ENCODE measurements at regions of chr6 and their contacts with region 1.

Region 1: DNA sequence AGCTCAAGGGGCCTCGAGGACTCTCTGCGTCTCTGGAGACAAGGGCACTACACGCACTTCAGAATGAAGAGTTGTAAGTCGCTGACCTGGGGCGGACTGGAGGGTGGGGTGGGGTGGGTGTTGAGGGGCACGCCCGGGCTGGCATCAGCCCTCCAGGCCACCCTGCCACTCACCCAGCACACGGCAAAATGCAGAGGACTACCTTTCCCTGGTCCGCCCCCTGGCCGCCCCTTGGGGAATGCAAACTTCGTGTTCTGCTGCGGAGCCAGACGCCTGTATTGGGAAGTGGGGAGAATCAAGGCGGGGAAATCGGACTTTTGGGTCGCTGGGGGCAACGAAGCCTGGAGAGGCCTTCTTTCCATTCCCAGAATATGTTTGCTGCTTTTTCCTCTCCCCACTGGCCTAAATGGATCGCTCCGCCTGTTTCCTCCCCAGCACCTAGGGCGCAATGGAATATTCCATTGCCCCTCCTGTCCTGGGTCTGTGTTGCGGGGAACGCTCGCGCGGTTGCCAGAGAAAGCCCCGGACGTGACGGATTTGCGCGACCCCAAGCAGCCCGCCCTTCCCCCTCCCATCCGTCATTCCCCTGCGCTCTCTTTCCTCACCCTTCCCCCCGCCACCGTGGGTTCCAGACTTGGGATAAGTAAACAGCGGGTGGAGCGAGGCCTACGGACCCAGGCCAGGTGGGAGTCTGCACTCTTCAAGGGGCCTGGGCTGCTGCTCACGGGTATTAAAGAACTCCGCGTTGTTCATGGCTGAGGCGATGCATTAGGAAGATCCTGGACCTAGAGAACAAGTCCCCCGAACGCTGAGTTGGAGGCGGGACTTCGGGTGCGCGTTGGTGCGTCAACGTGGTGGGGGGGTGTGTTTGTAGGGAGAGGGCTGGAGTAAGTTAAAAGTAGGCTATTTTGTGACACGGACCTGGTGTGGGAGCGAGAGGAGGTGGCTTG is at the start of gene PPT2:
- DNase-seq: peak; percentile 89
- H3K4me3 Mint-ChIP-seq: peak within 1 kb of the TSS; percentile 84
- H3K27ac Mint-ChIP-seq: peak within 1 kb of the TSS; percentile 72
- H3K4me1 Mint-ChIP-seq: peaks cover 31% of the 10 kb centered on the region
- H3K27me3 Mint-ChIP-seq: peaks cover 34% of the 10 kb centered on the region
- total RNA-seq, gene PPT2: 11.3 and 12.7 TPM in 2 replicates

Region 2: DNA sequence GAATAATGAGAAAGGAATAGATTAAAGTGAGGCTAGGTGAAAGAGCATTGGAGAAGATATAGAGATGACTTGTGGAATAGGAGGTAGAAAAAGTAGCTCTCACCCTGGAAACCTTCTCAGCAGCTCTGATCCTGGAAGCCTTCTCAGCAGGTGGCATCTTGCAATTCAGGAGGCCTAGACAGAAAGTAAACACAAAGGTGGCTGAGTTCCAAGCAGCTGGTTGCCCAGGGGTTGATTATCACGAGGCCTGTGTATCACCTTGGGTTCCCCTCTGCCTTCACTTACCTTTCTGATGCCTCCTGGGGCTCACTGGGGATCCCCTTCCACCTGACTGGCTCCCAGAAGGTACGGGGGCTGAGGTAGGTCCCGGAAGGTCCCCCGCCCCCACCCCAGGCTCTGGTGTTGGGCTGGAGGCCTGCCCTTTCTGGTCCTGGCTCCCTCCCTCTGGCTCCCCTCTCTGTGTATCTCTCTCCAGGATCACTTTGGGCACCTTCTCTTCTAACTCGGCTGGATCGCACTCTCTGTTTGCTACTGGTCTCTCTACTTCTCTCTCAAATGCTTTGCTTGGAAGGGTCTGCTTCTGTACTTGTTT is 1446.5 kb before region 1 on chr6:
- intact Hi-C with region 1: no loop called
- DNase-seq: no peak
- H3K4me3 Mint-ChIP-seq: no peak overlapping the region
- H3K27ac Mint-ChIP-seq: no peak overlapping the region
- H3K4me1 Mint-ChIP-seq: peaks cover 28% of the 10 kb centered on the region
- H3K27me3 Mint-ChIP-seq: no peaks in the 10 kb centered on the region

Region 3: GRCh38 chr6:32047850-32048766 is 105.7 kb before region 1 on chr6:
- intact Hi-C with region 1: loop called (anchors 10 kb)
- DNase-seq: peak; percentile 91
- H3K4me3 Mint-ChIP-seq: no peak overlapping the region
- H3K27ac Mint-ChIP-seq: no peak overlapping the region
- H3K4me1 Mint-ChIP-seq: no peaks in the 10 kb centered on the region
- H3K27me3 Mint-ChIP-seq: peaks cover 2% of the 10 kb centered on the region

Region 4: GRCh38 chr6:32087574-32088486 is 66.0 kb before region 1 on chr6:
- intact Hi-C with region 1: loop called (anchors 2 kb)
- DNase-seq: peak; percentile 90
- H3K4me3 Mint-ChIP-seq: no peak overlapping the region
- H3K27ac Mint-ChIP-seq: no peak overlapping the region
- H3K4me1 Mint-ChIP-seq: peaks cover 15% of the 10 kb centered on the region
- H3K27me3 Mint-ChIP-seq: peaks cover 74% of the 10 kb centered on the region

Region 5: DNA sequence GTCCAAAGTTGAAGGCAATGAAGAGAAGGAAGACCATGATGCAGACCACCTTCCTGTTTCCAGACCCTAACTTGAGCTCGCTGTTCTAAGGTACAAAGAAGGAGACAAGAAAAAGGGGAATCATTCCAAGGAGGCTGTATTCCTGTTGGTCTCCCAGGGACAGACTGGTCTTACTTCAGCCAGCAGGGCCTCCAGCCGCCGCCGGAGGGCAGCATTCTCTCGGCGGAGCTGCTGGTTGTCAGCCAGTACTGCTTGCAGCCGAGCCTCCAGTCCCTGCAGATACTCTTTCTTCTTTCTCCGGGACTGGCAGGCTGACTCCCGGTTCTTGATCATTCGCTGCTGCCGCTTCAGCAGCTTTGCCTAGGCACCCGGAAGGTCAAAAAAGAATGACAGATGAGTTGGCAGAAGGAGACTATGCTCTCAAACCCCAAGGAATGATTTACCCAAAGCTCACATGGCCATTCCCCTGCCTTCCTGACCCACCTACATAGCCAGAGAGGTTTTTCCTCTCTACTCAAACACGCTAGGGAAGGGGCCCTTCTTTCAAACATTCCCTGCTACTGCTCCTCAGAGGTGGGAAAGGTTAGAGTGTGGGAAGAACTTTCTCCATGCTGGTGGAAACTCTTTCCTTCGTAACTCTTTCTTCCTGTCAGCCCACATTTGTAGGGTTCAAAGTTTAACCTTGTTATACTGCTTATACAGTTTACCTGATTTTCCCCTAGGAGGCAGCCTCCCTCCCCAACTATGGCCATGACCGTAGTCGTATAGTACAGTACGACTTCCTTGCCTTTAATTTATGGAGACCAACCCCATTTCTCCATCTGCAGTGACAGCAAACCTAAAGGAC is 34.8 kb before region 1 on chr6:
- intact Hi-C with region 1: loop called (anchors 1 kb)
- DNase-seq: peak; percentile 92
- H3K4me3 Mint-ChIP-seq: no peak overlapping the region
- H3K27ac Mint-ChIP-seq: no peak overlapping the region
- H3K4me1 Mint-ChIP-seq: peaks cover 5% of the 10 kb centered on the region
- H3K27me3 Mint-ChIP-seq: no peaks in the 10 kb centered on the region

Region 6: DNA sequence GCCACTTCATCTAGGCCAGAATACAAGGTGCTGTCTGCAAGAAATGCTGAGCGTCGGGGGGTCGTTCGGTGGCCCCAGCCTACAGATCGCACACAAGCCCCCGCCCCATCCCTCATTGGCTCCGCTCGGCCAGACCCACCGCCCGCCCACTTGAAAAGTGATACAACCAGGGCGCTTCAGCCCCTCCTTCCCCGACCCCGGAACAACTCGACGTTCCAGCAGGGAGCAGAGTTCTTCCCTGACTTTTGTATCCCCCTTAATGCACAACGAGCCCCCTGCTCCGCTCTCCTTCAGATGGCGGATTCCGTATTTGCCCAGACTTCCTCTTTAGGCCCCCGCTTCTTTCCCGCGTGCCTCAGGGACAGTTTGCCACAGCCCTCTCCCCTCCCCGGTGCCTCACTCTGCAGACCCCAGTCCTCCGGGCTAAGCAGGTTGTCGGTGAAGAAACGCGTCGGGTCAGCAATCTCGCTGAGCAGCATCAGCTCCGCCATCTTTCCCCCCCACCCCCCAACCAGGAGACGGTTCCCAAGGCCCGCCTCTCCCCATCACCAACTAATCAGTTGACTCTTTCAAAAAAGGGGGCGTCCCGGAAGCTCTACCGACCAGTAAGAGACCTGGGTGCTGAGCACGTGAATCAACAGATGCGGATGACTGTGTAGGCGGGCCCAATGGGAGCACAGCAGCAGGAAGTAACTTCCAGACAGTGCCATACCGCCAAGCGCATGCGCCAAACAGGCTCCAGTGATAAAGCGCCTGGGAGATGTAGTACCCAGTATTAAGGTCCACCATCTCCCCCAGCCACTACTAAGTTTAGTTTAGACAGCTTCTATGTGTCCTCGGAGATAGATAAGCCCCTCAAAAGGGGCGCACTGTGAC is 25.9 kb before region 1 on chr6 and contains the start of gene ATF6B:
- intact Hi-C with region 1: loop called (anchors 1 kb)
- DNase-seq: peak; percentile 98
- H3K4me3 Mint-ChIP-seq: peak within 1 kb of the TSS; percentile 100
- H3K27ac Mint-ChIP-seq: peak within 1 kb of the TSS; percentile 96
- H3K4me1 Mint-ChIP-seq: peaks cover 39% of the 10 kb centered on the region
- H3K27me3 Mint-ChIP-seq: peaks cover 2% of the 10 kb centered on the region
- total RNA-seq, gene ATF6B: 72.9 and 81.0 TPM in 2 replicates

Region 7: DNA sequence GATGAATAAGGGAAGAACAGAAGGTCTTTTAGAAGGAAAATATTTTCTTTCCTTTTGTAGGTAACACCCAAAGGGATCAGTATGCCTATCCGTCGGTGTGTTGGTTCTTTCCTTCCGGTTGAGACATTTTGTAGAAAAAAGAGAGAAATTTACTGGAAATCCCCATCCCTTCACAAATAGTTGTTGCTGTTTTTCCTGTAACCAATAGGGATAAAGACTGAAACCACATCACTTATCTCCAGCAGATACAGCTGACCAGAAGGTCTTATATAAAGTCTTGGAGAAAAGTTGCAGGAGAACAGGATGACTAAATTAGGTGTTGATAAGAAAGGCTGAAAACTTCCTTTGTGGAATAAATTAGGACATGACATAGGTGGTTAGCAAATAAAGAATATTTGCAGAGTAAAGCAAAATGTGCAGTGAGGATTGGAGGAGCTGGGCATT is 450.6 kb after region 1 on chr6:
- intact Hi-C with region 1: no loop called
- DNase-seq: no peak
- H3K4me3 Mint-ChIP-seq: peak overlapping the region; percentile 64
- H3K27ac Mint-ChIP-seq: peak overlapping the region; percentile 82
- H3K4me1 Mint-ChIP-seq: peaks cover 27% of the 10 kb centered on the region
- H3K27me3 Mint-ChIP-seq: peaks cover 6% of the 10 kb centered on the region

Measured in activated CD4-positive, alpha-beta T cell treated with anti-CD3 and anti-CD28 coated beads, Interleukin-2, amount 10 ng/mL, durations not matched to agents 24 days and 14 days (primary cell).